A673 (cell line): ENCODE measurements at regions of chr2 and their contacts with region 1.

Region 1: GRCh38 chr2:100446696-100447095 is 23.6 kb upstream of the NMS start:
- DNase-seq: no peak
- H3K4me3 ChIP-seq: no peak overlapping the region
- H3K27ac ChIP-seq: no peak overlapping the region
- H3K4me1 ChIP-seq: no peaks in the 10 kb centered on the region
- H3K27me3 ChIP-seq: no peaks in the 10 kb centered on the region
- CTCF ChIP-seq: no peak

Region 2: GRCh38 chr2:99481941-99482340 is 964.8 kb before region 1 on chr2:
- CTCF ChIA-PET with region 1: no interaction called
- POLR2A ChIA-PET with region 1: interaction called, 10 read pairs
- intact Hi-C with region 1: no loop called
- DNase-seq: peak; percentile 25
- H3K4me3 ChIP-seq: no peak overlapping the region
- H3K27ac ChIP-seq: no peak overlapping the region
- H3K4me1 ChIP-seq: peaks cover 11% of the 10 kb centered on the region
- H3K27me3 ChIP-seq: no peaks in the 10 kb centered on the region
- CTCF ChIP-seq: no peak